Adrenal gland (tissue), 19 donors: ENCODE measurements at regions of chr1 and their contacts with region 1.

Region 1: GRCh38 chr1:212035123-212035834 is at the starts of genes DTL and INTS7:
- DNase-seq: peak; percentile 99
- H3K4me3 ChIP-seq: peak within 1 kb of the TSS in 3 of 4 donors; percentile 75 to 84 (median 80)
- H3K27ac ChIP-seq: peak within 1 kb of the TSS in 4 of 5 donors; percentile 53 to 93 (median 82)
- H3K4me1 ChIP-seq: peaks cover 22 to 35% of the 10 kb centered on the region in 2 donors
- H3K27me3 ChIP-seq: no peaks in the 10 kb centered on the region
- CTCF ChIP-seq: peak; percentile 85 to 99 (median 92)
- POLR2A ChIP-seq: peak in 1 of 2 donors; percentile 38
- total RNA-seq, gene DTL: 0.06 to 11.4 (median 0.68) TPM
- total RNA-seq, gene INTS7: 9.4 to 24.5 (median 12.8) TPM

Region 2: GRCh38 chr1:211680752-211681327 is 354.4 kb before region 1 on chr1:
- intact Hi-C with region 1: loop called in 1 of 2 experiments (anchors 10 kb)
- DNase-seq: peak; percentile 60 to 86 (median 74)
- H3K4me3 ChIP-seq: no peak overlapping the region
- H3K27ac ChIP-seq: no peak overlapping the region
- H3K4me1 ChIP-seq: peaks cover 0 to 3% of the 10 kb centered on the region in 2 donors
- H3K27me3 ChIP-seq: no peaks in the 10 kb centered on the region
- CTCF ChIP-seq: peak; percentile 75 to 95 (median 89)
- POLR2A ChIP-seq: no peak